ENCODE measurements at regions of chr5 and their contacts with region 1.

Region 1: DNA sequence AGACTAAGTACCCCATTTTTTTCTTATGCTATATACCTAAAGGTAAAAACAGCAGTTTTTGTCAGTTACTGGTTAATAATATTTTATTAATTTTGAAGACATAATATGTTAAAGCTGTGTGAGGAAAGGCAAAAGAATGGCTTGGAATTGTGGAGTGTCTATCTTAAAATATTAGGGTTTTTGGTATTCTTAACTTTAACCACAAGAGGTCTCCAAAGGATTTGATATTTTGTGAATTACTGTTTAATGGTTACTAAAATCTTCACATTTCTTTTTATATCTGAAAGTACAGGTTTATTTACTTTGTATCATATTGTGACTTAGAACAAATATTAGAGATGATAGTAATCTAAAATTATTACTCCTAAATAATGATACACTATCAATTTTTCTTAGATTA is 32.0 kb upstream of the DHFR start:
- DNase-seq: no peak
- H3K4me3 ChIP-seq: no peak overlapping the region
- H3K27ac ChIP-seq: no peak overlapping the region
- H3K4me1 ChIP-seq: peaks cover 0 to 8% (median 0%) of the 10 kb centered on the region in 6 donors
- H3K27me3 ChIP-seq: no peaks in the 10 kb centered on the region
- CTCF ChIP-seq: peak in 7 of 11 experiments; percentile 16 to 49 (median 34)
- POLR2A ChIP-seq: no peak

Region 2: GRCh38 chr5:80437326-80437725 is 249.4 kb before region 1 on chr5:
- intact Hi-C with region 1: no loop called
- DNase-seq: no peak
- H3K4me3 ChIP-seq: no peak overlapping the region
- H3K27ac ChIP-seq: no peak overlapping the region
- H3K4me1 ChIP-seq: peaks cover 0 to 3% (median 0%) of the 10 kb centered on the region in 6 donors
- H3K27me3 ChIP-seq: no peaks in the 10 kb centered on the region
- CTCF ChIP-seq: no peak
- POLR2A ChIP-seq: no peak

Region 3: DNA sequence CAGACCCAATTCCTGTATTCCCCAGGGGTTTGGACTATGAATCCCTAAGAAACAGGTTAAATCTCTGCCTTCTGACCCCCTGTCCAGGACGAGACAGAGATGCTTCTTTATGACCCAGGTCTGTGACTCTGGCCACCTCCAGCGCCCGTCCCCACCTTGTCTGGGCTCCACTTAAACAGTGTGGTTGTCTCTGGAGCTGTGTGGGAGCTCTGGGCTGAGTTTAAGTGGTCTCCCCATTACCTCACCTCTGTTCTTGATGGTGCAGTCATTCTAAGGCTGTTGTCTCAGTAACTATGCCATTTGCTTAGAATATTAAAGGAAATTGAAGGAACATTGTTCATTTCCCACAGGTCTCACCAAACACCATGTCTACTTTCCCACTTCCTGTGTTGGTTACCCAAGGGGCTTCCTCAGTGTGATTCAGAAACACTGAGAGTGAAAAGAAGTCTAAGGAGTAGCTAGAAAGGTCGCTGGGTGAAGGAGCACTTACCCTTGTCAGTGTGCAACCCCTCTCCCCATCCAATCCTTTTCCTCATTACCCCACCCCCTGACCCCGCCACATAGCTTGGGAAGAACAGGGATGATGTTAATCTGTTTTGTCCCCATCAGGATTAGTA is 418.6 kb after region 1 on chr5:
- intact Hi-C with region 1: loop called (anchors 10 kb)
- DNase-seq: no peak
- H3K4me3 ChIP-seq: no peak overlapping the region
- H3K27ac ChIP-seq: no peak overlapping the region
- H3K4me1 ChIP-seq: no peaks in the 10 kb centered on the region
- H3K27me3 ChIP-seq: no peaks in the 10 kb centered on the region
- CTCF ChIP-seq: no peak
- POLR2A ChIP-seq: no peak

Region 4: DNA sequence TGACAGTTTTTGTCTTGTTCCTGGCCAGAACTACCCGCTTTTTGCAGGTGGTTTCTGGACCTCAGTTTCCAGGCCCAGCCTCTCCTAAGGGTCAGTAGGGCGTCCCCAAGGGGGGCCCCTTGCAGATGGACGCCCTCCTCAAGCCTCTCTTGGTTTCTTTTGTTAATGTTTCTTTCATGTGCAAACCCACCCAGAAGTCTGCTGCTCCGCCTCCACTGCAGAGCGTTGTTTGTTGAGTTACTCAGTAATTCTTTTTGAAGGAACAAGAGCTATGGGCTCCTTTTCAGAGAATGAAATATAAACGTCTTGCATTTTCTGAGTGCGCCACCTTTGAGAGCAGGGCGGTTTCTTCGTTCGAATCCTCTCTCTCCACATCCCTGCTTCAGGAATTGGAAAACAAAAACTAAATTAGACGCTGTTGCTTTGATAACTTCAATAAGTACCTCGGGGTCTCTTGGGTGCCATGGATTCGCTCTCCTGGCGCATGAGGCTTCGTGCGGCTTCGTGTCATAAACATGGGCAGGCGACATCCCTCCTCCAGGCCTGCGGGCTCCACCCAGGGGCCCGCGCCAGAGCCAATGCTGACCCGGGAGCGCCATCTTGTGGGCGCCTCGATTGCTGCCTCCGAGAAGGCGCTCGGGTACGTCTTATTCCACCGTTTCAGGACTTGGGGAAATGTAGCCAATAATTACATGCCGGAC is 508.0 kb after region 1 on chr5:
- intact Hi-C with region 1: loop called (anchors 10 kb)
- DNase-seq: peak; percentile 91
- H3K4me3 ChIP-seq: peak overlapping the region in 1 of 8 donors; percentile 30
- H3K27ac ChIP-seq: no peak overlapping the region
- H3K4me1 ChIP-seq: peaks cover 0 to 9% (median 7%) of the 10 kb centered on the region in 6 donors
- H3K27me3 ChIP-seq: no peaks in the 10 kb centered on the region
- CTCF ChIP-seq: peak; percentile 45 to 89 (median 82)
- POLR2A ChIP-seq: no peak